ENCODE measurements at regions of chr21 and their contacts with region 1.

Region 1: DNA sequence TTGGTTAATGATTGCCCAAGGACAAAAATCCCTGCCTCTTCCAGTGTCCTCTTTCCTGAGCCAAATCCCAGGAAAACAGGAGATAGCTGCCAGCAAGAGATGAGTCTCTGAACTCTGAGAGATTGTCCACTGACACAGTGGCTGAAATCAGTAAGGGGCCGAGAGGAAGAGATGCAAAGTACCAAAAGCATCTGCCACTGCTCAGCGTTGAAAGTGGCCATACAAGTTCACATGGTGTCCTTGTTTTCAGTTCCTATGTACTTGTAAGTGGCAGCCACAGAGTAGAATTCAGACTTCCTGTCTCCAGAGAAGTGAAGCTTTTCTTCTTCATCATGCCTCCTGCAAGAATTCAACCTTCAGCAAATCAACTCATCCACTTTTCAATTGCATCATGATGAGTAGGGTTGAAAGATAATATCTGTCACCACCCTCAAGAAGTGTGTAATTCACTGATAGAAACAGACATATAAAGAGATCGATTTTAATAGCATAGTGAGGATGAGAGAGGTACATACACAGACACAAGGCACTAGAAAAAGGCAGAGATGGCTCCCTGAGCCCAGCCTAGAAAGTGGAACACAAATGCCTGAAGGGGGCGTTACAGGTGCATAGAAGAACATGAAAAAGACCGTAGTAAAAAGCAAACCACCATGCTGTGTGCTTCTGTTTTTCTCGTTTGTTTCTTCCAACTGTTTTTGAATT is 185.8 kb downstream of the MRPL39 start:
- DNase-seq: peak; percentile 84
- ATAC-seq: peak; percentile 97
- H3K4me3 Mint-ChIP-seq: peak overlapping the region; percentile 66
- H3K27ac Mint-ChIP-seq: peak overlapping the region; percentile 91
- H3K4me1 Mint-ChIP-seq: peaks cover 47% of the 10 kb centered on the region
- H3K27me3 Mint-ChIP-seq: no peaks in the 10 kb centered on the region

Region 2: DNA sequence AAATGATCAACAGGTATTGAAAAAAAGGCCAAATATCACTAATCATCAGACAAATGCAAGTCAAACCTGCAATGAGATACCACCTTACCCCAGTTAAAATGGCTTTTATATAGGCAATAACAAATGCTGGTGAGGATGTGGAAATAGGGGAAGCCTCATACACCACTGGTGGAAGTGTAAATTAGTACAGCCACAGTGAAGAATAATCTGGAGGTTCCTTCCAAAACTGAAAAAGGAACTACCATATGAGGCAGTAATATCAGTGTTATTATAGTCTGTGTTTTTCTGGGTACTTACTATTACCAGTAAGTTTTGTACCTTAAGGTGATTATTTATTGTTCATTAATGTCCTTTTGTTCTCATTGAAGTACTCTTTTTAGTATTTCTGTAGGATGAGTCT is 15.5 kb before region 1 on chr21:
- CTCF ChIA-PET with region 1: no interaction called
- DNase-seq: no peak
- ATAC-seq: no peak
- H3K4me3 Mint-ChIP-seq: no peak overlapping the region
- H3K27ac Mint-ChIP-seq: no peak overlapping the region
- H3K4me1 Mint-ChIP-seq: peaks cover 27% of the 10 kb centered on the region
- H3K27me3 Mint-ChIP-seq: peaks cover 6% of the 10 kb centered on the region

Region 3: DNA sequence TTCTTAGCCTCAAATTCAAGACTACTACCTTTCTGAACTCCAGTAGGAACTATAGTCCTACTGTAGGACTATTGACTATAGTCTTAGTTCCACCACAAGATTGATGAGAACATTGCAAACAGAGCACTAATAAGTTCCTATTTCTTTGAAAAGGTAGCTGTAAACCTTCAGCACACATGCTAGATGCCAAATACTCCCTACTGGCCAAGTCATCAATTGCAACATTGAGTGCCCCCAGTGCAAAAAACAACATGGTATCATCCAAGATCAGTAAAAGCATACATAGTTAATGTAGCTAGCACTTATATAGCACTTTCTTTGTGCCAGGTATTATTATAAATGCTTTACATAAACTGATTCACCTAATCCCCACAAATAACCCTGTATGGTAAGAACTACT is 86.0 kb after region 1 on chr21:
- CTCF ChIA-PET with region 1: interaction called, 16 read pairs
- DNase-seq: no peak
- ATAC-seq: peak; percentile 71
- H3K4me3 Mint-ChIP-seq: no peak overlapping the region
- H3K27ac Mint-ChIP-seq: no peak overlapping the region
- H3K4me1 Mint-ChIP-seq: peaks cover 49% of the 10 kb centered on the region
- H3K27me3 Mint-ChIP-seq: no peaks in the 10 kb centered on the region

Region 4: GRCh38 chr21:25568246-25568645 is 146.8 kb after region 1 on chr21:
- CTCF ChIA-PET with region 1: interaction called, 16 read pairs
- DNase-seq: no peak
- ATAC-seq: no peak
- H3K4me3 Mint-ChIP-seq: peak overlapping the region; percentile 51
- H3K27ac Mint-ChIP-seq: peak overlapping the region; percentile 84
- H3K4me1 Mint-ChIP-seq: peaks cover 82% of the 10 kb centered on the region
- H3K27me3 Mint-ChIP-seq: no peaks in the 10 kb centered on the region